Dorsolateral prefrontal cortex (tissue), 120 donors: ENCODE measurements at regions of chr9 and their contacts with region 1.

Region 1: DNA sequence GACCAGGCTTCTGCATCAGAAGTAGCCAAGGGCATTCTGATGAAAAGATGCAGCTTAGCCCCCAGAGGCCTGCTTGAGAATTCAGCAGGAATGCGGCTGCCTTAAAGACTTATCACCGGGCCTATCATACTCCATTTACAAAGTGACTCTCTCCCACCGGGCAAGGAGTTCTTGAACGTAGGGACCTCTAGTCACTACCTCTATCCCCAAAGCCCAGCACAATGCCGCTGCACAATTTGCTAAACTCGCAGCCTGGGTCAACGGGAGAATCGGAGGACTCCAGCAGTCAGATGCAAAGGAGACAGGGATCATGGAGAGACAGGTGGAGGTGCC is 661 bp downstream of the PDCL start:
- DNase-seq: no peak
- H3K4me3 ChIP-seq: peak overlapping the region; percentile 47 to 100 (median 96)
- H3K27ac ChIP-seq: peak overlapping the region in 55 of 59 donors; percentile 62 to 98 (median 92)
- H3K27me3 ChIP-seq: no peaks in the 10 kb centered on the region
- CTCF ChIP-seq: no peak

Region 2: DNA sequence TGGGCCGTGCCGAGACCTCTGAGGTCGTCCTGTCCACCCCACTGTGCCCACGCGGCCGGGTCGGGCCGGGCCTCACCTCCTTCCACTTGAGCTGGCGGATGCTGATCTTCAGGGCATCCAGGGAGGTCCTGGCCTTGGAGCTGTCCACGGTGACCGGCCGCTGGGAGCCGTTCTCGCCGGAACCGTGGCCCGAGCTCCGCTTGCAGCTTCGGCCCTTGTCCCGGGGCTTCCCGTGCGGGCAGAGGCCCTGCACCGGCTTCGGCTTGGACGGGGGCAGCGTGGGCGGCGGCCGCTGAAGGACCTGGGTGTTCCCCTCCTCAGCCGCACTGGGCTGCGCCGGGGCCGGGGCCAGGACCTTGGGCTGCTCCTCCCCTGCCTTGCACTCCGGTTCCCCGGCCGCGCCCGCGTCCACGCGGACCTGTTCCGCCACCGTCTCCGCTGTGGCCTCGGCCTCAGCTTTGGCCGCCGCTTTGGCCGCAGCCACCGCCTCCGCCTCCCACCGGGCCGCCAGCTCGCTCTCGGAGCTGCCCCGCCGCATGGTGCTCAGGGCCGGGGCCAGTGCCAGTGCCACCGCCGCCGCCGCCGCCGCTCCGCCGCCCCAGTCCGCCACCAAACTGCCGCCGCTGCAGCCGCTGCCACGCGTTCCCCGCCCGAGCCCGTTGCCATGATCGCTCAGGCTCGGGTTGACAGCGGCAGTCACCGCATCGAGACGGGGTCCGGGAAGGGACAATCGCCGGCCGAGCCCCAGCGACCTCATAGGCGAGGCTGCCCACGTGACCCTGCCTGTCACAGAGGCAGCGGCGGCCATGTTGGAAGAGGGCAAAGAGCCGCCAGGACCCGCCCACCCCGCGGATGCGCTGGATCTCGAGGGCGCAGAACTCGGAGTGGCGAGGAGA is 734.9 kb before region 1 on chr9 and contains the start of gene TTLL11:
- intact Hi-C with region 1: loop called in 1 of 2 experiments (anchors 10 kb)
- DNase-seq: peak; percentile 97 to 99 (median 98)
- H3K4me3 ChIP-seq: peak within 1 kb of the TSS; percentile 51 to 99 (median 94)
- H3K27ac ChIP-seq: peak within 1 kb of the TSS in 56 of 59 donors; percentile 32 to 98 (median 88)
- H3K27me3 ChIP-seq: no peaks in the 10 kb centered on the region
- CTCF ChIP-seq: peak in 43 of 56 donors; percentile 7 to 61 (median 34)
- total RNA-seq, gene TTLL11: 39.9 to 86.0 (median 58.2) TPM

Region 3: GRCh38 chr9:122445155-122445749 is 382.5 kb before region 1 on chr9:
- intact Hi-C with region 1: no loop called
- DNase-seq: no peak
- H3K4me3 ChIP-seq: no peak overlapping the region
- H3K27ac ChIP-seq: no peak overlapping the region
- H3K27me3 ChIP-seq: peaks cover 0 to 14% (median 0%) of the 10 kb centered on the region in 45 donors
- CTCF ChIP-seq: no peak

Region 4: GRCh38 chr9:122904823-122905710 is 77.3 kb after region 1 on chr9 and contains the start of gene RC3H2:
- intact Hi-C with region 1: loop called (anchors 5 to 10 kb)
- DNase-seq: peak; percentile 99 to 100 (median 100)
- H3K4me3 ChIP-seq: peak within 1 kb of the TSS; percentile 57 to 99 (median 90)
- H3K27ac ChIP-seq: peak within 1 kb of the TSS; percentile 85 to 99 (median 96)
- H3K27me3 ChIP-seq: no peaks in the 10 kb centered on the region
- CTCF ChIP-seq: peak in 17 of 56 donors; percentile 4 to 48 (median 23)
- total RNA-seq, gene RC3H2: 46.8 to 94.9 (median 69.0) TPM

Region 5: DNA sequence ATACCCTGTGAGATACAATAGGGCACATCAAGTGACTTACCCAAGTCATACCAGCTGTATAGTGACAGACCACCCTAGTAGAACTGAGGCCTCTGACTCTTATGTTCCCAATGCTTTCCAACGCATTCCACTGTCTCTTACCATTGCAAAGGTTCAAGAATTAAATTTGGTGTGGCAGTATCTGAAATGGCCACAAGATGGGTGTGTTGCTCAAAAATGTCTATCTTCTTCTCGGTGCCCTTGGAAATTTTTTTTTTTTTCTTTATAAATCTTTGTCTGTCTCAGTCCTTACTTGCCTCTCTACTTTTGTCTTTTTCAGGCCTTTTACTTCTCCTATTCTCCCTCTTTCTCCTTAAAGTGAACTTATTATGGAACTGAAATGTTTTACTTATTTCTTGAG is 254.1 kb after region 1 on chr9:
- intact Hi-C with region 1: no loop called
- DNase-seq: no peak
- H3K4me3 ChIP-seq: no peak overlapping the region
- H3K27ac ChIP-seq: no peak overlapping the region
- H3K27me3 ChIP-seq: no peaks in the 10 kb centered on the region
- CTCF ChIP-seq: peak; percentile 36 to 76 (median 60)